CD8-positive, alpha-beta memory T cell (primary cell): ENCODE measurements at regions of chr2 and their contacts with region 1.

Region 1: GRCh38 chr2:70142590-70143313 is 48.1 kb downstream of the C2orf42 start:
- DNase-seq: peak; percentile 99 to 100 (median 100)
- H3K4me3 ChIP-seq: peak overlapping the region; percentile 65
- H3K4me3 Mint-ChIP-seq: peak overlapping the region; percentile 83 to 94 (median 91)
- H3K27ac ChIP-seq: peak overlapping the region; percentile 99
- H3K27ac Mint-ChIP-seq: peak overlapping the region; percentile 98 to 100 (median 100)
- H3K4me1 ChIP-seq: peaks cover 46% of the 10 kb centered on the region
- H3K4me1 Mint-ChIP-seq: peaks cover 48 to 70% (median 55%) of the 10 kb centered on the region in 3 donors
- H3K27me3 ChIP-seq: no peaks in the 10 kb centered on the region
- H3K27me3 Mint-ChIP-seq: peaks cover 0 to 4% of the 10 kb centered on the region in 2 donors

Region 2: DNA sequence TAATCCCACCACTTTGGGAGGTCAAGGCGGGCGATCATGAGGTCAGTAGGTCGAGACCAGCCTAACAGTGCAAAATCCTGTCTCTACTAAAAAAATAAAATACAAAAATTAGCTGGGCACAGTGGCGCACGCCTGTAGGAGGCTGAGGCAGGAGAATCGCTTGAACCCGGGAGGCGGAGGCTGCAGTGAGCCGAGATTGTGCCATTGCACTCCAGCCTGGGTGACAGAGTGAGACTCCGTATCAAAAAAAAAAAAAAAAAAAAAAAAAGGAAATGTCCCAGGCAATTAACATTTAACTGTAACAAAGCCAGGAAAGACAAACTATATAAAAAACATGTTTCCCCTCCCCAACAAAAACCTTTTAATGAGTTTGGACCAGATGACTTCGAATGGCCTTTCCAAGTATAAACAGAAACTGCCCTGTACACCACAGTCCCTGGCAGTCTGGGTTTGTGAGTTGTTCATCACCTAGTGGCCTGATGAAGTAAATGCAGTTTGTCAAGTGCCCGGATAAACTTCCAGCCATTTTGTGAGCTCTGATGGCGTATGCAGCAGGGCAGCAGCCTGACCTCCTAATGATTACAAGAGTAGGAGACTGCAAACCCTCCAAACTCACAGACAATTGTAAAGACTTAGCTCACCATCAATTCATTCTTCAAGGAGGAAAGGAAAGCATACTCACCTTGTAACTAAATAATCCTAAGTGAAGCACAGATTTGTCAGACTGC is 72.0 kb before region 1 on chr2:
- CTCF ChIA-PET with region 1: interaction called, 21 read pairs
- POLR2A ChIA-PET with region 1: interaction called, 7 read pairs
- DNase-seq: peak; percentile 30 to 79 (median 74)
- H3K4me3 ChIP-seq: peak overlapping the region; percentile 33
- H3K4me3 Mint-ChIP-seq: peak overlapping the region; percentile 54 to 86 (median 78)
- H3K27ac ChIP-seq: peak overlapping the region; percentile 12
- H3K27ac Mint-ChIP-seq: peak overlapping the region; percentile 87 to 99 (median 98)
- H3K4me1 ChIP-seq: peaks cover 48% of the 10 kb centered on the region
- H3K4me1 Mint-ChIP-seq: peaks cover 41 to 52% (median 47%) of the 10 kb centered on the region in 3 donors
- H3K27me3 ChIP-seq: no peaks in the 10 kb centered on the region
- H3K27me3 Mint-ChIP-seq: no peaks in the 10 kb centered on the region

Region 3: DNA sequence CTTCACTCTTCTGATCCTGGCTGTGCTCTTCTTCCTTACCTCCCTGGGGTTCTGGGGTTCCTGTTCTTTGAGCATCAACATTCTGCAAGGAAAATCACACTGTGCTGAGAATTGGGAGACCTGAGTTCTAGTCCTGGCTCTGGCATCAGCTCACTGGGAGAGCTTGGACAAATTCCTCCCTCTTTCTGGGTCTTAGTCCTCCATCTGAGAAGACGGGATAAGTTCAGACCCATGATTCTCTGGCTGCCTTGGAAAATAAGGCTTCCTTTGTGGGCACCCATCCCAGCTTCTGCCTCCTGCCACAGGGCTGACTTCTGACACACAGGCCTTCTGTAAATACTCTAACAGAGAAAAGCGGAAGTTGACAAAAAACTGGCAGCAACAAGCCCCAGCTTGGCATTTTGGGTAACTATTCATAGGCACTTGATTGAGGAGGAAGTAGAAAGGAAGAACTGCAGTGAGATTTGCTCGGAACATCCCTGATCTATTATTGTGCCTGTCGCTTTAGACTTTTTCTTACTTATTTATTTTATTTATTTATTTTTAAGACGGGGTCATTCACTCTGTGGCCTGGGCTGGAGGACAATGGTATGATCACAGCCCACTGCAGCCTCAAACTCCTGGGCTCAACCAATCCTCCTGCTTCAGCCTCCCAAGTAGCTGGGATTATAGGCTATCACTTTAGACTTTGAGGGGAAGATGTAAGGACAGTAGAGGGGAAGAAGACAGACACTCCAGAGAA is 47.6 kb before region 1 on chr2:
- CTCF ChIA-PET with region 1: interaction called, 54 read pairs
- POLR2A ChIA-PET with region 1: interaction called, 168 read pairs
- DNase-seq: peak in 4 of 5 donors; percentile 27 to 76 (median 64)
- H3K4me3 ChIP-seq: peak overlapping the region; percentile 54
- H3K4me3 Mint-ChIP-seq: peak overlapping the region; percentile 72 to 91 (median 78)
- H3K27ac ChIP-seq: peak overlapping the region; percentile 36
- H3K27ac Mint-ChIP-seq: peak overlapping the region; percentile 89 to 99 (median 96)
- H3K4me1 ChIP-seq: peaks cover 45% of the 10 kb centered on the region
- H3K4me1 Mint-ChIP-seq: peaks cover 44 to 50% (median 49%) of the 10 kb centered on the region in 3 donors
- H3K27me3 ChIP-seq: no peaks in the 10 kb centered on the region
- H3K27me3 Mint-ChIP-seq: peaks cover 0 to 1% of the 10 kb centered on the region in 2 donors

Region 4: GRCh38 chr2:70124983-70125480 is 17.7 kb before region 1 on chr2:
- CTCF ChIA-PET with region 1: interaction called, 34 read pairs
- POLR2A ChIA-PET with region 1: interaction called, 153 read pairs
- DNase-seq: peak in 4 of 5 donors; percentile 45 to 79 (median 62)
- H3K4me3 ChIP-seq: peak overlapping the region; percentile 84
- H3K4me3 Mint-ChIP-seq: peak overlapping the region; percentile 86 to 98 (median 95)
- H3K27ac ChIP-seq: peak overlapping the region; percentile 90
- H3K27ac Mint-ChIP-seq: peak overlapping the region; percentile 98 to 100 (median 100)
- H3K4me1 ChIP-seq: peaks cover 63% of the 10 kb centered on the region
- H3K4me1 Mint-ChIP-seq: peaks cover 61 to 82% (median 81%) of the 10 kb centered on the region in 3 donors
- H3K27me3 ChIP-seq: no peaks in the 10 kb centered on the region
- H3K27me3 Mint-ChIP-seq: peaks cover 0 to 6% of the 10 kb centered on the region in 2 donors

Region 5: DNA sequence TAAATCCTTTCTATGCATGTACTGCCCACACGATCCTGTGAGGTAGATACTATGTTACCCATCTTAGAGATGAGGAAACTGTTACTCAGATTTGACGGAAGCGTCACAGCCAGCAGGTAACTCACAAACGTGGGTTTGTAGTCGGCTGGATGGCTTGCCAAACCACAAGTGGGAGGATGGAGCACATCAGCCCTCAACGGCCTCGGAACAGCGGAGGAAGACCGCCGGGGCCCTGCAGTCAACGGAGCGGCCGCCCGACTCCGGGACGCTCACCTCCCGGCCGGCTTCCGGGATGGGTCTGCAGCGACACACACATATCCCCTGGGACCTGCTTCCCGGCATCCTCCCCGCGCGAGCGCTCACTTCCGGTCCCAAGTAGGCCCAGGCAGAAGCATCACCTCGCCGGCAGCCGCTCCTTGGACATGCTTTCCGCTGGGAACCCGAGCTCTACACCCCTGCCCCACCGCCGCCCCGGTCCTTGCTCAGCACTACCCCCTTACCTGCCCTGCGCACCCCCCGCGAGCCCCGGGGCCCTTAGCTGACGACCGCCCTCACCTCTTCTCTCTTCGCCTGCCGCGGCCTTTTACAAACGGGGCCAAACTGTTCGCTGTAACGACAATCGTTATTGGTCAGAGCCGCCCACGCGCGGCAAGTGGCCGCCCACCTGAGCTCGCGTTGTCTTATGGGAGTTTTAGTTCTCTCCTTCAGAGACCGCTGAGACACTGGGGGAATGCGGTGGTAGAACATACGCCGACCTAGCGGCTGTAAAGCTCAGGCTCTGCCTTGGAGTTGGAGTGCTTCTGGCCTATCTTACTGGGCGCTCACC is 47.9 kb after region 1 on chr2 and contains the start of gene C2orf42:
- CTCF ChIA-PET with region 1: interaction called, 9 read pairs
- POLR2A ChIA-PET with region 1: interaction called, 15 read pairs
- DNase-seq: peak; percentile 86 to 97 (median 96)
- H3K4me3 ChIP-seq: peak within 1 kb of the TSS; percentile 82
- H3K4me3 Mint-ChIP-seq: peak within 1 kb of the TSS; percentile 90 to 98 (median 95)
- H3K27ac ChIP-seq: peak within 1 kb of the TSS; percentile 93
- H3K27ac Mint-ChIP-seq: peak within 1 kb of the TSS; percentile 96 to 100 (median 99)
- H3K4me1 ChIP-seq: peaks cover 5% of the 10 kb centered on the region
- H3K4me1 Mint-ChIP-seq: peaks cover 17 to 22% (median 22%) of the 10 kb centered on the region in 3 donors
- H3K27me3 ChIP-seq: no peaks in the 10 kb centered on the region
- H3K27me3 Mint-ChIP-seq: peaks cover 0 to under 1% of the 10 kb centered on the region in 2 donors
- total RNA-seq, gene C2orf42: 29.1 to 34.6 TPM